ENCODE measurements at regions of chr22 and their contacts with region 1.

Region 1: DNA sequence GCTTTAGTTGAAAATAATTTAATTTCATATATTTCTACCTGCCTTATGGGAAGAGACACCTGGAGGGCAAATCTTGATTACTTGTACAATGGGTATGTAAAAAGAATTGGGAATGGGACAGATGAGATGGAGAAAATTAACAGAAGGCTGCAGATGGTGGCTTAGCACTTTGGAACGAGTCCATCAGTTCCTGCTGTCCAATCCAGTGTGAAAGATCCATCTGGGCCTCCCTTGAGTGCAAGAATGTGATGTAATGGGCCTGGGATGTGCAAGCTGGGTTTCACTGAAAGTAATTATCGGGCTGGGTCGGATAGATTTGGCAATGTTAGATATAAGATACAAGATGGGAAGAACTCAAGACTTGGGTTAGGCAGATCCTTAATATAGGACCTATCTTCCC is 42.0 kb downstream of the CECR2 start:
- DNase-seq: no peak

Region 2: GRCh38 chr22:17140826-17141766 is 270.1 kb before region 1 on chr22:
- in situ Hi-C with region 1: no loop called
- DNase-seq: no peak

Region 3: GRCh38 chr22:17501679-17502285 is 90.6 kb after region 1 on chr22:
- in situ Hi-C with region 1: loop called (anchors 25 kb)
- DNase-seq: peak; percentile 84

Region 4: GRCh38 chr22:17742527-17742902 is 331.3 kb after region 1 on chr22:
- in situ Hi-C with region 1: no loop called
- DNase-seq: peak; percentile 68